ENCODE measurements at regions of chrX and their contacts with region 1.

Region 1: GRCh38 chrX:72714476-72714916 is 390 bp upstream of the PHKA1 start:
- DNase-seq: no peak
- H3K4me3 Mint-ChIP-seq: peak overlapping the region; percentile 76
- H3K27ac Mint-ChIP-seq: peak overlapping the region; percentile 29
- H3K4me1 Mint-ChIP-seq: peaks cover 16% of the 10 kb centered on the region
- H3K27me3 Mint-ChIP-seq: no peaks in the 10 kb centered on the region

Region 2: DNA sequence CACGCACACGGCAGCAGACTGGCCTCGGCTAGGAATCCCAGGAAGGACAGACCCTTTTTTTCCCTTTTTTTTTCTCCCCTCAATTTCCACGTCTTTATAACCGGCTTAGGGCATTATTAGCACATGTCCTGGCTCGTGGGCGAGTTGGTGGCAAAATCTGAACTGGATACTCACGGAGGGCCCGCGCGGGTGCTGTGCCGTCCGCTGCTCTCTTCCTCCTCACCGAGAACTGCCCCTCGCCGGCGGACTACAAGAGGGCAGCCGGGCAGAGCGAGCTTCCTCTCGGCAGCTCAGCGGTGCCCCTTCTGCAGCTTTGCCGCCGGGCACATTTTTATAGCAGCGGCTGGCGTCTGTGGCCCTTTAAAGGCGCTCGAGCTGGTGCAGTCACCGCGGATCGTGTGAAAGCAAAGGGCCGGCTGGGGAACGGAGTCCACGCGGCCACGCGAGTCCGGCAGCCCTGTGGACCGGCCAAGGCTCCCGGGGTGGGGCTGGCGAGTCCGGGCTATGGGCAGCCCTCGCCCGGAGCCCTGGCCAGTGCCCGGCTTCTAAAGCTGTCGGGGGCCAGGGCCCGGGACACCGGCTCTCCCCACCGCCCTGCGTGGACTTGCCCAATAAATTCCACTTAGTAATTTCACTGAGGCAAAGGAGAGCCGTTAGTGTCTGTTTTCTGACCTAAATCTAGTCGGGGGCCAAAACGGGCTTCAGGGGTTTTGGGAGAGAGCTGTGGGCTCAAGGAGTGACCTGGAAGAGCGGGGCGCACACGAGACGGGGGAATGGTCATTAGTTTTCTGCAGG is 407.4 kb before region 1 on chrX:
- intact Hi-C with region 1: loop called (anchors 5 kb)
- DNase-seq: no peak
- H3K4me3 Mint-ChIP-seq: peak overlapping the region; percentile 83
- H3K27ac Mint-ChIP-seq: peak overlapping the region; percentile 44
- H3K4me1 Mint-ChIP-seq: peaks cover 24% of the 10 kb centered on the region
- H3K27me3 Mint-ChIP-seq: peaks cover 57% of the 10 kb centered on the region

Region 3: GRCh38 chrX:72349190-72349589 is 365.3 kb before region 1 on chrX:
- intact Hi-C with region 1: loop called (anchors 2 kb)
- DNase-seq: peak; percentile 0
- H3K4me3 Mint-ChIP-seq: peak overlapping the region; percentile 59
- H3K27ac Mint-ChIP-seq: peak overlapping the region; percentile 82
- H3K4me1 Mint-ChIP-seq: peaks cover 25% of the 10 kb centered on the region
- H3K27me3 Mint-ChIP-seq: no peaks in the 10 kb centered on the region

Region 4: DNA sequence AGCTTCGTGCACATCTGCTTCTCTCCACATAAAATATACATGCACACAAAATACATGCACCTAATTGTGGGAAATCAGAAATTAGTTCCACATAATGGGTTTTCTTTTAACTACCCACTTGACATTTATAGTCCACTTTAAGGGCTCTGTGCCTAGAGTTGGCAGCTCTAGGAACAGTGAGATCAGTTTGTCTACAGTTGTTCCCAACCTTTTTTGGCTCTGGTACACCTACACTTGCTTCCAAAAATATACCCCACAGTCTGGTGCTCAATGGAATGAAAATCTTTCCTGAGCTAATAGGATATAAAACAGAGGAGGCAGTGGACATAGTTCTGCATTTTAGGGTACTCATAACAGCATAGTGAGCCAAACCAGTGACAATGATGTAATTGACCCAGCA is 178.0 kb before region 1 on chrX:
- intact Hi-C with region 1: no loop called
- DNase-seq: no peak
- H3K4me3 Mint-ChIP-seq: no peak overlapping the region
- H3K27ac Mint-ChIP-seq: no peak overlapping the region
- H3K4me1 Mint-ChIP-seq: no peaks in the 10 kb centered on the region
- H3K27me3 Mint-ChIP-seq: no peaks in the 10 kb centered on the region

Region 5: DNA sequence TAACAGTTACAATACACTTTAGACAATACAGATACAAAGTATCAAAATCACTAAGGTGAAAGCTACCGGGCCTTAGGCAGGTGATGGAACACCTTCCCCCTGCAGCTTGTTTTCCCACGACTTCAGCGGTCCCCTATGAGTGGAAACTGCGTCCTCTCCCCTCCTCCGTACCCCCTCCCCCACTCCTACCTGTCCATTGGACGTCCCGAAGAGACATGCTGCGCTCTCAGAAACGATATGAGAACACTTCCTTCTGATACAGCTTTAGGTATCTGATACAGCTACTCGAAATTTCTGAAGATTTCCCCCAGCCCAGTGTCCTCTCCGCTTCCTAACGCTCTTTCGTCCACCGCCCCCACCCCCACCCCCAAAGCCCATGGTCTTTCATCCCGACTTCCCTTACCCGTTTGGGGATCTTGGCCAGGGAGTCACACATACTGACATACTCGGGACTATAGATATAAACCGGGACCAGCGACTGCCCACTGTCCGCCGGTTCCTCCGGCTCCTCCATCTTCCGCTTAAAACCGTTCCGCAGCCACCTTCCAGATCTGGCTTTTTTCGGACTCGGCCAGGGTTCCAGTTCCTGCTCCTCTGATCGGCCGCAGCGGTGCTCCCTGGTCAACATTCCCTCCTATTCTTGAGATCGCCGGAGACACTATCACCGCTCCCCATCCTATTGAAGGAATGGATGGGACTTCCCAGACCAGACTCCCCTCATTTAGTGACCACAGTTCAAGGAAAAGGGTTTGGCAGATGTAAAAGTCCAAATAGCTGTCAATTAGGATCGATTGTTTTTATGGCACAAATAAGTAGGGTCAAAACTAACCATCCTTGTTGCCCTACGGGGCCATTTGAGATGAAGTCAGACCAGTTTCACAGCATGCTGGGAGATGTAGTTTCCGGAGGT is 142.0 kb before region 1 on chrX and contains the start of gene HDAC8:
- intact Hi-C with region 1: loop called (anchors 5 kb)
- DNase-seq: peak; percentile 26
- H3K4me3 Mint-ChIP-seq: peak within 1 kb of the TSS; percentile 98
- H3K27ac Mint-ChIP-seq: peak within 1 kb of the TSS; percentile 95
- H3K4me1 Mint-ChIP-seq: peaks cover 5% of the 10 kb centered on the region
- H3K27me3 Mint-ChIP-seq: peaks cover 2% of the 10 kb centered on the region
- total RNA-seq, gene HDAC8: 29.6 and 30.6 TPM in 2 replicates

Region 6: GRCh38 chrX:72584163-72584562 is 130.3 kb before region 1 on chrX:
- intact Hi-C with region 1: no loop called
- DNase-seq: no peak
- H3K4me3 Mint-ChIP-seq: no peak overlapping the region
- H3K27ac Mint-ChIP-seq: no peak overlapping the region
- H3K4me1 Mint-ChIP-seq: no peaks in the 10 kb centered on the region
- H3K27me3 Mint-ChIP-seq: no peaks in the 10 kb centered on the region

Region 7: GRCh38 chrX:72676465-72676864 is 38.0 kb before region 1 on chrX:
- intact Hi-C with region 1: no loop called
- DNase-seq: no peak
- H3K4me3 Mint-ChIP-seq: no peak overlapping the region
- H3K27ac Mint-ChIP-seq: no peak overlapping the region
- H3K4me1 Mint-ChIP-seq: no peaks in the 10 kb centered on the region
- H3K27me3 Mint-ChIP-seq: no peaks in the 10 kb centered on the region

Measured in activated T-helper 1 cell treated with anti-CD3 and anti-CD28 coated beads, Interleukin-12 subunit alpha, Interleukin-12 subunit beta, Interleukin-2, Interleukin-4 antibody, amounts not matched to agents 30 ng/mL and 10 ng/mL and 1 ng/mL, durations not matched to agents 14 hours and 24 hours and 36 hours (primary cell).